Posterior cingulate gyrus (tissue), 11 donors: ENCODE measurements at regions of chr7 and their contacts with region 1.

Region 1: GRCh38 chr7:1193593-1194424 is 33.8 kb upstream of the ZFAND2A start:
- DNase-seq: peak; percentile 27 to 95 (median 71)

Region 2: GRCh38 chr7:1169409-1170368 is 24.1 kb before region 1 on chr7:
- intact Hi-C with region 1: no loop called
- DNase-seq: peak in 9 of 10 donors; percentile 36 to 95 (median 80)

Region 3: DNA sequence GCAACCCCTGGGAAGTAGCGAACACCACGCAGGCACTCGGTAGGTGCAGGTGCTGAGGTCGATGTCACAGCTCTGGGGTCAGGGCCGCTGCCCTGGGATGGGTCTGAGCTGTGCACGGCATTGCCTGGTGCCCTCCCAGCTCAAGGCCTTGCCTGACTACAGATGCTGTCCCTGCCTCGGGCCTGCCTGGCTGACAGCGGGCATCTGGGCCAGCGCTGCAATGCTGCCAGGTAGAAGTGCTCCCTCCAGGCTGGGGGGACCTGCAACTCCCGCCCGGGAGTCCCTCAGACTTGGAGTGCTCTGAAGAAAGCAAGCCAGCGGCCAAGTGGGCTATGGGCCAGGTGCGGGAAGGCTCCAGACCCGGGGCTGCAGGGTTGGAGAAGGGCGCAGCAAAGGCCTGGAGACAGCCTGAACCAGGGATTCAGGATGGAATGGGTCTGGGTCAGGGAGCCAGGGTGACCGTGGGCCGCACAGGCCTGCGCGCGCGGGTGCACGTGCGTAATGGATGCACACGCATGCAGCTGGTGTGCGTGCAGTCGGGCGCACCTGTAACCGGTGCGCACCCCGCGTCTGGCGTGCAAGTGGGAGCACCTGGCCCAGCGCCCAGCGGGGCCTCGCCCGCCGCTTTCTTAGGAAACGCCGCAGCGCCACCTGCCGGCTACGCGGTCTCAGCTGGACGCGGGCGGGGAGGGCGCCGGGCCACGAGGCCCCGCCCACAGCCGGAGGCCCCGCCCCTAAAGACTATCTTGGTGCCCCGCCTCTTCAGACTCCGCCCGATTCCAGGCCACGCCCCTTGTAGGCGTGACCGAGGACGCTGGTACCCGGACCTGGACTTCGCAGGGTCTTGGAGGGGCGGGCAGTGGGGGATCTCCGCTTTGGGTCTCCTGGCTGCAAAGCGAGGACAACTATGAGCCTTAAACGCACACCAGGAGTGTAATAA is 218.8 kb after region 1 on chr7:
- intact Hi-C with region 1: loop called (anchors 1 kb)
- DNase-seq: peak in 9 of 10 donors; percentile 27 to 95 (median 69)

Region 4: GRCh38 chr7:1432411-1433082 is 238.7 kb after region 1 on chr7:
- intact Hi-C with region 1: loop called (anchors 5 kb)
- DNase-seq: peak in 9 of 10 donors; percentile 40 to 93 (median 74)

Region 5: DNA sequence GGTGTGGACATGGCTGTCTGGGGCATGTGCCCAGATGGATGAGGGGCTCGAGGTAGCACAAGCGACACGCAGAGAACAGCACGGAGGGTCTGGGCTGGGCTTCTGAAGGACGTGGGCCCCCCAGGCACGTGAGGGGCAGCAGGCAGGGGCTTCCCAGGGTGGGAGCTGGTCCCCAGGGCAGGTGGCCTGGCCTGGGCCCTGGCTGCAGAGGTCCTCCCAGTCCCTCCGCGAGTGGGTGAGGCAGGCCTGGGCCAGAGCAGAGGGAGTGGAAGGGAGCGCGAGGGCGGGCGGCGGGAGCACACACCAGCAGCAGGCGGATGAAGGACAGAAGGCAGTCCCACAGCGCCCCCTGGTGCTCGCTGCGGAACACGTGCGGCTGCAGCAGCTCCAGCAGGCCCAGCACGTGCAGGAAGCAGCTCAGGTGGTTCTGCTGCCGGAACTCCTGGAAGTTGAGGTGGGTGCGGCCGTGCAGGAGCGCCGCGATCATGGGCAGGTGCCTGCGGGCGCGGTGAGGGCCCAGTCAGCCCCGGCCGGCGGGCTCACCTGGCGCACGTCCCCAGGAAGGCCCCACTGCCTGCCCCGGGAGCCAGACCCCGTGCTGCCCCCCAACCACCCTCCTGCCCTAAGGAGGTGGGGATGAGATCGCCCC is 280.2 kb after region 1 on chr7:
- intact Hi-C with region 1: loop called (anchors 2 kb)
- DNase-seq: peak; percentile 75 to 98 (median 90)